Activated CD4-positive, alpha-beta T cell treated with anti-CD3 and anti-CD28 coated beads, Interleukin-2, amount 10 ng/mL, durations not matched to agents 24 days and 14 days (primary cell): ENCODE measurements at regions of chr17 and their contacts with region 1.

Region 1: GRCh38 chr17:35879773-35880654 is at the start of gene CCL5:
- DNase-seq: peak; percentile 89
- H3K4me3 Mint-ChIP-seq: peak within 1 kb of the TSS; percentile 78
- H3K27ac Mint-ChIP-seq: peak within 1 kb of the TSS; percentile 92
- H3K4me1 Mint-ChIP-seq: peaks cover 50% of the 10 kb centered on the region
- H3K27me3 Mint-ChIP-seq: no peaks in the 10 kb centered on the region
- total RNA-seq, gene CCL5: 19.6 and 20.7 TPM in 2 replicates

Region 2: GRCh38 chr17:35889818-35890763 is 10.1 kb after region 1 on chr17:
- intact Hi-C with region 1: loop called (anchors 1 kb)
- DNase-seq: peak; percentile 69
- H3K4me3 Mint-ChIP-seq: peak overlapping the region; percentile 44
- H3K27ac Mint-ChIP-seq: peak overlapping the region; percentile 77
- H3K4me1 Mint-ChIP-seq: peaks cover 47% of the 10 kb centered on the region
- H3K27me3 Mint-ChIP-seq: no peaks in the 10 kb centered on the region

Region 3: GRCh38 chr17:35898283-35899070 is 18.5 kb after region 1 on chr17:
- intact Hi-C with region 1: loop called (anchors 1 kb)
- DNase-seq: peak; percentile 69
- H3K4me3 Mint-ChIP-seq: peak overlapping the region; percentile 27
- H3K27ac Mint-ChIP-seq: peak overlapping the region; percentile 71
- H3K4me1 Mint-ChIP-seq: peaks cover 50% of the 10 kb centered on the region
- H3K27me3 Mint-ChIP-seq: no peaks in the 10 kb centered on the region